ENCODE measurements at regions of chr12 and their contacts with region 1.

Region 1: DNA sequence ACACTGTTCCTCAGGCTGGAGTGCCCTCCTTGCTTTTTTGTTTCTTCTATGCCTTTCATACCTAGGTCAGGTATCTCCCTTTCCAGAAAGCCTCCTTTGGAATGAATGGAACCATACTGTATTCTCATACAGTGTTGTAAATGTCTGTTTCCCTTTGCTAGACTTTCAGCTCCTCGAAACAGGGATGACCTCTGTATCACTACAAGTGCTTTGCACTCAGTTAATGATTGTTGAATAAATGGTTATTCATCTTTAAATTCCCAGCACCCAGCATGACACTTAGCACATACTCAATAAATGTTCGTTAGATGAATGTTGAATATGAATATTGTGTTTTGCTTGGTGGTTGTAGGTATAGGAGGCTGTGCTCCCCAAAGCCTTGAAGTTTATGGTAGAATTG is 5.9 kb upstream of the TULP3 start:
- DNase-seq: no peak
- H3K4me3 Mint-ChIP-seq: no peak overlapping the region
- H3K27ac Mint-ChIP-seq: no peak overlapping the region
- H3K4me1 Mint-ChIP-seq: peaks cover 27% of the 10 kb centered on the region
- H3K27me3 Mint-ChIP-seq: no peaks in the 10 kb centered on the region

Region 2: GRCh38 chr12:2925322-2925995 is 40.6 kb after region 1 on chr12:
- CTCF ChIA-PET with region 1: interaction called, 4 read pairs
- POLR2A ChIA-PET with region 1: no interaction called
- intact Hi-C with region 1: loop called (anchors 1 kb)
- DNase-seq: no peak
- H3K4me3 Mint-ChIP-seq: no peak overlapping the region
- H3K27ac Mint-ChIP-seq: no peak overlapping the region
- H3K4me1 Mint-ChIP-seq: peaks cover 11% of the 10 kb centered on the region
- H3K27me3 Mint-ChIP-seq: no peaks in the 10 kb centered on the region

Region 3: DNA sequence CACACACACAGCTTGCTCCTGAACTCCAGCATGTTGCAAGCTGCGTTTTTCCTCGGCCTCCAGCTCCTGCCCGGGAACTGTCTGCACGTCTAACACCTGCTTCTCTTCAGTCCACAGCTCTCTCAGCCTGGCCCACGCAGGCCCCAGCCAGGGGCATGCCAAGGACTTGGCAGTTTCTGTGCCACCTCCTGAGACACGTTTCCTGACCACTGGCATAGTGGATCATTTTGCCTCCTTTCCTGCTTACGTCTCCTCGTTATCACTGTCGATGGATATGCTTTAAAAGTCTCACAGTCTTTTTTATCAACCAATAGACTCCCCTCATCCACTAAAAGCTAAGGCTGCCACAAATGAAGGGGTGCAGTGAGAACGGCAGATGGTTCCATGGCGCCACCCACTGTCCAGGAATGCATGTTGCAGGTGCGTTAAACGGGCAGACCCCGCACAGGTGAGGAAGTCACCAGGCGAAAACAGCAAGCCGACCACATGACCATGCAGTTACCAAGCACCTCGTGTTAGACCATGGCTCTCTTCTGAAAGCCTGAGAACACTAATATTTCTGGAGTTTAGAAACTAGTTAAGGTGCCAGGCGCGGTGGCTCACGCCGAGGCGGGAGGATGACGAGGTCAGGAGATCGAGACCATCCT is 59.7 kb after region 1 on chr12:
- CTCF ChIA-PET with region 1: interaction called, 12 read pairs
- POLR2A ChIA-PET with region 1: no interaction called
- intact Hi-C with region 1: loop called (anchors 2 kb)
- DNase-seq: peak; percentile 79
- H3K4me3 Mint-ChIP-seq: peak overlapping the region; percentile 14
- H3K27ac Mint-ChIP-seq: no peak overlapping the region
- H3K4me1 Mint-ChIP-seq: no peaks in the 10 kb centered on the region
- H3K27me3 Mint-ChIP-seq: no peaks in the 10 kb centered on the region